CD8-positive, alpha-beta T cell (primary cell): ENCODE measurements at regions of chr5 and their contacts with region 1.

Region 1: GRCh38 chr5:14706615-14707021 is 42.1 kb downstream of the OTULIN start:
- DNase-seq: peak in 8 of 9 experiments; percentile 33 to 83 (median 60)
- ATAC-seq: peak; percentile 94
- H3K4me3 ChIP-seq: no peak overlapping the region
- H3K4me3 Mint-ChIP-seq: peak overlapping the region; percentile 76
- H3K27ac ChIP-seq: peak overlapping the region; percentile 46 to 72
- H3K27ac Mint-ChIP-seq: peak overlapping the region; percentile 99
- H3K4me1 ChIP-seq: peaks cover 79% of the 10 kb centered on the region
- H3K4me1 Mint-ChIP-seq: peaks cover 80% of the 10 kb centered on the region
- H3K27me3 ChIP-seq: no peaks in the 10 kb centered on the region
- H3K27me3 Mint-ChIP-seq: no peaks in the 10 kb centered on the region
- CTCF ChIP-seq: no peak

Region 2: GRCh38 chr5:14669975-14670374 is 36.6 kb before region 1 on chr5:
- CTCF ChIA-PET with region 1: interaction called, 4 read pairs
- POLR2A ChIA-PET with region 1: interaction called, 8 read pairs
- intact Hi-C with region 1: loop called (anchors 2 kb)
- DNase-seq: peak in 2 of 9 experiments; percentile 38 to 56
- ATAC-seq: no peak
- H3K4me3 ChIP-seq: no peak overlapping the region
- H3K4me3 Mint-ChIP-seq: peak overlapping the region; percentile 40
- H3K27ac ChIP-seq: no peak overlapping the region
- H3K27ac Mint-ChIP-seq: peak overlapping the region; percentile 34
- H3K4me1 ChIP-seq: peaks cover 81% of the 10 kb centered on the region
- H3K4me1 Mint-ChIP-seq: peaks cover 87% of the 10 kb centered on the region
- H3K27me3 ChIP-seq: no peaks in the 10 kb centered on the region
- H3K27me3 Mint-ChIP-seq: no peaks in the 10 kb centered on the region
- CTCF ChIP-seq: no peak

Region 3: DNA sequence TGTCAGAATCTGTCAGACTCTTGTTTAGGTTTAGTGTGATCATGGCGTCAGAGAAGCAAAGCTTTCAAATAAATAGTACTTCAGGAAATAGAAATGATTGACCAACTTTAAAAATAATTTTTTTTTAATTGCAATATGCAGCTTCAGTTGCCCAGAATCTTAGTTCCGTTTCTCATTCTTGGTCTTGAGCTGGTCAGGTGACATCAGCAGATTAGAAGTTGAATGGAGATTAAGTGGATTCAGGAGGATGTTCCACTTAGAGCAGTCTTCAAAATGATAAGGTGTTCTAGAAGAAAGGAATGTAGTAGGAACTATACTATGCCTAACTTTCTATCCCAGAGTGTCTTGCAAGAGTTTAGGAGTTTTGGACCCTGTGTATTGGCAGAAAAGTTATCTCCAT is 11.5 kb before region 1 on chr5:
- CTCF ChIA-PET with region 1: no interaction called
- POLR2A ChIA-PET with region 1: no interaction called
- intact Hi-C with region 1: loop called (anchors 1 kb)
- DNase-seq: no peak
- ATAC-seq: no peak
- H3K4me3 ChIP-seq: no peak overlapping the region
- H3K4me3 Mint-ChIP-seq: no peak overlapping the region
- H3K27ac ChIP-seq: no peak overlapping the region
- H3K27ac Mint-ChIP-seq: no peak overlapping the region
- H3K4me1 ChIP-seq: no peaks in the 10 kb centered on the region
- H3K4me1 Mint-ChIP-seq: peaks cover 24% of the 10 kb centered on the region
- H3K27me3 ChIP-seq: no peaks in the 10 kb centered on the region
- H3K27me3 Mint-ChIP-seq: no peaks in the 10 kb centered on the region
- CTCF ChIP-seq: no peak

Region 4: GRCh38 chr5:14720236-14720971 is 13.8 kb after region 1 on chr5:
- CTCF ChIA-PET with region 1: interaction called, 72 read pairs
- POLR2A ChIA-PET with region 1: interaction called, 4 read pairs
- intact Hi-C with region 1: loop called in 1 of 2 experiments (anchors 2 kb)
- DNase-seq: no peak
- ATAC-seq: no peak
- H3K4me3 ChIP-seq: no peak overlapping the region
- H3K4me3 Mint-ChIP-seq: no peak overlapping the region
- H3K27ac ChIP-seq: no peak overlapping the region
- H3K27ac Mint-ChIP-seq: peak overlapping the region; percentile 60
- H3K4me1 ChIP-seq: peaks cover 10% of the 10 kb centered on the region
- H3K4me1 Mint-ChIP-seq: peaks cover 26% of the 10 kb centered on the region
- H3K27me3 ChIP-seq: no peaks in the 10 kb centered on the region
- H3K27me3 Mint-ChIP-seq: no peaks in the 10 kb centered on the region
- CTCF ChIP-seq: no peak

Region 5: DNA sequence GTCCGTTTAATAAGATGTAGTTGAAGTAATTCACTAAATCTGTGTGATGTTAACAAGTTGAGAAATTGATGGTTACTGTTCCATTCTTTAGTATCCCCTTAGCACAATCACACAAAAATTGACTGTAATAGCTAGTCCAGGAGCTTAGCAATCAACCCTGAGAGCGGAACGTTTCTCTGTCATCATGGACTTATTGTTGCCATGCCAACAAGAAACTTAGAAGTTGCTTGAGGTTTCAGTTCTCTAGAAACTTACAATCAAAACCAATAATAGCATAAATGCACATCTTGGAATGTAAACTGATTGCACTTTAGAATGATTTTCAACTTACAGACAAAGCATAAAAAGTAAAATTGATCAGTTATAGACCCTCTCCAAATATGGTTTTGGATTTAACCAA is 290.4 kb after region 1 on chr5:
- CTCF ChIA-PET with region 1: interaction called, 7 read pairs
- POLR2A ChIA-PET with region 1: interaction called, 4 read pairs
- intact Hi-C with region 1: loop called in 1 of 2 experiments (anchors 5 kb)
- DNase-seq: peak in 1 of 9 experiments; percentile 35
- ATAC-seq: no peak
- H3K4me3 ChIP-seq: no peak overlapping the region
- H3K4me3 Mint-ChIP-seq: no peak overlapping the region
- H3K27ac ChIP-seq: no peak overlapping the region
- H3K27ac Mint-ChIP-seq: no peak overlapping the region
- H3K4me1 ChIP-seq: peaks cover 4% of the 10 kb centered on the region
- H3K4me1 Mint-ChIP-seq: peaks cover 14% of the 10 kb centered on the region
- H3K27me3 ChIP-seq: no peaks in the 10 kb centered on the region
- H3K27me3 Mint-ChIP-seq: no peaks in the 10 kb centered on the region
- CTCF ChIP-seq: no peak